Common myeloid progenitor, CD34-positive (primary cell): ENCODE measurements at regions of chr4 and their contacts with region 1.

Region 1: GRCh38 chr4:48275247-48275646 is 5.6 kb upstream of the TEC start:
- DNase-seq: peak; percentile 64 to 76 (median 75)
- H3K4me3 ChIP-seq: no peak overlapping the region
- H3K27ac ChIP-seq: no peak overlapping the region
- H3K4me1 ChIP-seq: peaks cover 12 to 23% (median 16%) of the 10 kb centered on the region in 4 experiments
- H3K27me3 ChIP-seq: no peaks in the 10 kb centered on the region

Region 2: DNA sequence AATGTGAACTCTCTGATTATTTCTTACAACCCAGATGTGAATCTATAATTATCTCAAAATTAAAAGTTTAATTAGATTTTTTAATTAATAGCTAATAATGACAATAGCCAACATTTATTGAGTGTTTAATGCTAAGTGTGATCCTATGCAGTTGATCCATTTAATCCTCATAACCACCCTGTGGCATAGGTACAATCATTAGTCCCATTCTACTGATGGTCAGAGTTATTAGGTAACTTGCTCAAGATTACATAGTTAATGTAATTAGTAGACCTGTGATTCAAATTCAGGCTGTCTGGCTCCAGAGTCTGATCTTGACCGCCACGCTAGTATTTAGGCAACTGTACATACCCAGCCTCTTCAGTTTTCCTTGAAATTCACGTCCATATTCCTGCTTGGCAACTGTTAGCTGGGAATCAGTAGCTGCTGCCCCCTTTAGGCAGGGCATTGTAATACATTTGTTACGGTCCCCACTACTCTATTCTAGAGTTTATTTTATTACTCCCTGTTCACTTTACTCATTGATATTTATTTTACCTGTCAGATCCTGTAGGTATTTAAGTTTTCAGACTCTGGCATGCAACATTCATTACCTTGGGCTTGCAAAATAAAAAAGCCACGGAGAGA is 15.0 kb after region 1 on chr4:
- CTCF ChIA-PET with region 1: interaction called, 12 read pairs
- POLR2A ChIA-PET with region 1: no interaction called
- DNase-seq: peak in 2 of 3 donors; percentile 31 to 48
- H3K4me3 ChIP-seq: no peak overlapping the region
- H3K27ac ChIP-seq: no peak overlapping the region
- H3K4me1 ChIP-seq: peaks cover 0 to 1% (median 0%) of the 10 kb centered on the region in 4 experiments
- H3K27me3 ChIP-seq: no peaks in the 10 kb centered on the region

Region 3: DNA sequence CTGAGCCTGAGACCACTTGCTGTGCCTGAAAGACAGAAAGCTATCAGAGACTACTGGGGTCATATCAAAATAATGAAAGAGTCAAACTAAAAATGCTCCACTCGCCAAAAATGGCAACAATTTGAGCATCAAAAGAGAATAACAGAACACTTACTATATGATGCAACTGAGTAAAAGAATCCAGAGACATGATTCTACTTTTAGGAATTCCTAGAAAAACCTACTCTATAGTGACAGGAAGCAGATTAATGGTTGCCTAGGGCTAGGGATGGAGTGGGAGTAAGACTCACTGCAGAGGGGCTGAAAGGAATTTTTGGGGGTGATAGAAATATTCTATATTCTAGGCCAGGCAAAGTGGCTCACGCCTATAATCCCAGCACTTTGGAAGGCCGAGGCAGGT is 36.6 kb after region 1 on chr4:
- CTCF ChIA-PET with region 1: no interaction called
- POLR2A ChIA-PET with region 1: no interaction called
- DNase-seq: no peak
- H3K4me3 ChIP-seq: no peak overlapping the region
- H3K27ac ChIP-seq: no peak overlapping the region
- H3K4me1 ChIP-seq: no peaks in the 10 kb centered on the region
- H3K27me3 ChIP-seq: no peaks in the 10 kb centered on the region